Ascending aorta (tissue), 2 donors: ENCODE measurements at regions of chr16 and their contacts with region 1.

Region 1: GRCh38 chr16:53503270-53503923 is 388 bp upstream of the AKTIP start:
- DNase-seq: peak; percentile 100
- H3K4me3 ChIP-seq: peak overlapping the region; percentile 83 to 93
- H3K27ac ChIP-seq: peak overlapping the region; percentile 91 to 97
- H3K4me1 ChIP-seq: peaks cover 10 to 27% of the 10 kb centered on the region in 2 donors
- H3K27me3 ChIP-seq: no peaks in the 10 kb centered on the region
- CTCF ChIP-seq: no peak

Region 2: DNA sequence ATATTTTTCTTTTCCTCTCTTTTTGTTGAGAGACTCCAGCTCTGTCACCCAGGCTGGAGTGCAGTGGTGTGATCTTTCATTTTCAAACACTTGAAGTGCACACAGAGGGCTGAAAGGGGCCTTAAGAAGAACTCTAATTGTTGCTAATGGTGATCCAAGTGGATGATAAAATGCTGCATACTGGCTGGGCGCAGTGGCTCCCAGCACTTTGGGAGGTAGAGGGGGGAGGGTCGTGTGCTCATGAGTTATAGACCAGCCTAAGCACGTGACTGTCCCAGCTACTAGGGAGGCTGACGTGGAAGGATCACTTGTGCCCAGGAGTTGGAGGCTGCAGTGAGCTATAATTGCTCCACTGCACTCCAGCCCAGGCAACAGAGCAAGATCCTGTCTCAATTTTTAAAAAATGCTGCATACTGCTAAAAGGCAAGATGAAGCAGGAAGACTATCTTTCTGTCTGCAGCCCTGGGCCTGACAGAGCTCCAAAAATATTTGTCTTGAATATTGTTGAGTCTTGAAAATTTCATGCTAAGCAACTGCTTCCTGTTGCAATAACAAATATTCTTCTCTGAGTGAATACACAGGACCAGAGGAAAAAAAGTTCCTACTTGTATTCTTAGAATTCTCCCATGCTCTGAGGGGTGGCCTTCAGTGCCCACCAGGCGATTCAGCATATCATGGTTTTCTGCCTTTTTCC is 63.3 kb after region 1 on chr16:
- intact Hi-C with region 1: no loop called
- DNase-seq: no peak
- H3K4me3 ChIP-seq: no peak overlapping the region
- H3K27ac ChIP-seq: no peak overlapping the region
- H3K4me1 ChIP-seq: no peaks in the 10 kb centered on the region
- H3K27me3 ChIP-seq: no peaks in the 10 kb centered on the region
- CTCF ChIP-seq: no peak

Region 3: DNA sequence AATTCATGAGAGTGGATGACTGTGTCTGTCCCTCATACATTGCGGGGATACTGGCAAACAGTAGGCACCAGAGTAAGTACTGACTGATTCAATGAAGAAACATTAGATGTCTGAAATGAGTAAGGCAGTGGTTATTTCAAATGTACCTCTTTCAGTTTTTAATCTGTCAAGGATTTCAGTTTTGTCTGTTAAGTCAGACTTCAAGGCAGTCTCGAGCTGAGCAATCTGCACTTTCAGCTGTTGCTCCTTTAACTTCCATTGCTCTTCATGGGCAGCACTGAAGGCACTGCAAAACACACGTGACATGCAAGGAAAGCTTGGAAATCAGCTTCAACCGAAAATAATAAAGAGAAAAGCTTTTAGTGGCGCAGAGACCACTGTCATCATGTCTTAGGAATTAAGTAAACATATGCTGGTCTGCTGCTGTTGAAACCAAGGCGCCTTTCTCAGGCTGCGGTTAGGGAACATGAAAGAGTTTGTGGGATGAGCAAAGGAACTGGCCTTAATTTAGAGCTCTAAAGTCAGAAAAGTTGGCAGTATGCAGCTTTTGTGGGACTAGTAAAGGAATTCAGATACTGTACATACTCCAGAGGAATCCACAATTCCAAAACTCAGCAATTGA is 161.4 kb after region 1 on chr16:
- intact Hi-C with region 1: no loop called
- DNase-seq: no peak
- H3K4me3 ChIP-seq: peak overlapping the region in 1 of 2 donors; percentile 57
- H3K27ac ChIP-seq: peak overlapping the region; percentile 64 to 74
- H3K4me1 ChIP-seq: peaks cover 0 to 3% of the 10 kb centered on the region in 2 donors
- H3K27me3 ChIP-seq: no peaks in the 10 kb centered on the region
- CTCF ChIP-seq: no peak

Region 4: DNA sequence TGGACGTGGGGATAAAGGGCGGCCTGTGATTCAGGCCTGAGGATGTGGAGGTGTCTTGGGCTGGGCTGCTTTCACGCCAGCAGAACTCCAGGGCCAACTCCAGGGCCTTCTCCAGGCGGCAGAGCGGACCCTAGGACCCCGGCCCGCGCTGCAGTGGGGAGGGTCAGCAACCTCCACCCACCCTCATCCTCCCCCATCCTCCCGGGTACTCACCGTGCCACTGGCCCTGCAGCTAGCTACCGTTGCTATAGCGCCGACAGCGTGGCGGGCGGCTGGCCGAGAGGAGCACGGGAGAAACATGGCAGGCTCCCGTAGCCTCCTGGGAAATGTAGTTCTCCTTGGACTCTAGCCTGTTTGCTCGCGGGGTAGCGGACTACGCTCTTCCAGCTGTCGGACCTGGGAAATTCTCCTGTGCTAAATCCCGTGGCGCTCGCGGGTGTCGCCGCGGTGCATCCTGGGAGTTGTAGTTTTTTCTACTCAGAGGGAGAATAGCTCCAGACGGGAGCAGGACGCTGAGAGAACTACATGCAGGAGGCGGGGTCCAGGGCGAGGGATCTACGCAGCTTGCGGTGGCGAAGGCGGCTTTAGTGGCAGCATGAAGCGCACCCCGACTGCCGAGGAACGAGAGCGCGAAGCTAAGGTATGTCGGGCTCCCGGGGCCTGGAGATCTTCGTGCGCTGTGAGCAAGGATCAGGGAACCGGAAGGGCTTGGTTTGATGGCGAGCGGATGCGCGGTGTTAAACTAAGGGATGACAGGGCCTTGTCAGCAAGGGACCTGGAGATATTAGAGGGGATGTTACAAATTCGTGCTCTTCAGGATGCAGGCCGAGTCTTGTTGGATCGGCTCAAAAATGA is 200.4 kb after region 1 on chr16 and contains the starts of genes FTO and RPGRIP1L:
- intact Hi-C with region 1: loop called (anchors 2 kb)
- DNase-seq: peak; percentile 98 to 100
- H3K4me3 ChIP-seq: peak within 1 kb of the TSS; percentile 75 to 84
- H3K27ac ChIP-seq: peak within 1 kb of the TSS; percentile 58 to 70
- H3K4me1 ChIP-seq: peaks cover 0 to 3% of the 10 kb centered on the region in 2 donors
- H3K27me3 ChIP-seq: no peaks in the 10 kb centered on the region
- CTCF ChIP-seq: peak in 1 of 3 experiments; percentile 14
- total RNA-seq, gene FTO: 50.2 TPM
- total RNA-seq, gene RPGRIP1L: 0.96 TPM

Region 5: DNA sequence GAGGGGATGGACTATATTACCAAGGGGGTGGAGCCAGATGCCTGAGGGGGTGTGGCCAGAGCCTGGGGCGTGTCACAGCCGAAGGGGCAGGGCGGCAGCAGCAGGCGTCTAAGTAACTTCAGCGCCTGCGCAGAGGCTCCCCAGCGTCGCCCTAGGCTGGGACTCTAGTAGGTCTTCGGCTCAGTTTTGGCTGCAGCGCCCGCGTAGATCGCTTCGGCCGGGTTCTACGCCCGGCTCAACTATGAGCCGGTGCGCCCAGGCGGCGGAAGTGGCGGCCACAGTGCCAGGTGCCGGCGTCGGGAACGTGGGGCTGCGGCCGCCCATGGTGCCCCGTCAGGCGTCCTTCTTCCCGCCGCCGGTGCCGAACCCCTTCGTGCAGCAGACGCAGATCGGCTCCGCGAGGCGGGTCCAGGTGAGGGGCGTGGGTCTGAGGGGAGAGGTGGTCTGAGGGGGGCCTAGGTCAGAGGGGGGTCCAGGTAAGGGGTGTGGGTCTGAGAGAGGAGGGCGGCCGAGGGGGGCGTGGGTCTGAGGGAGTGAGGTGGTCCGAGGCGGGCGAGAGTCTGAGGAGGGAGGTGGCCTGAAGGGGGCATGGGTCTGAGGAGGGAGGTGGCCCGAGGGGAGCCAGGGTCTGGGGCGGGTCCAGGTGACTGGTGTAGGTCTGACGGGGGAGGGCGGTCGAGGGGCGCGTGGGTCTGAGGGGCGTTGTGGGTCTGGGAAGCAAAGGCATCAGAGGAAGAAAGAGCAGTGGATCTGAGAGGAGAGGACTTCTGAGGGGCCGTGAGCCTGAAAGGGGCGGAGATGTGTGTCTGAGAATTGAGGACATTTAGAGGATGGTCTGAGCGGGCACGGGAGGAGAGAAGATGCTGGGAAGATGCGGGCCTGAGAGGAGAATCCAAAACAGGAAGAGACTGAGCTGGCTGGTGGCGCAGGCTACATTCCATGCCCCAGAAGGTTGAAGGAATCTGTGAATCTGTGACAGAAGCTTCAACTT is 2005.8 kb after region 1 on chr16 and contains the start of gene LPCAT2:
- intact Hi-C with region 1: loop called (anchors 10 kb)
- DNase-seq: peak in 1 of 2 donors; percentile 92
- H3K4me3 ChIP-seq: peak within 1 kb of the TSS; percentile 65 to 78
- H3K27ac ChIP-seq: peak within 1 kb of the TSS; percentile 44 to 61
- H3K4me1 ChIP-seq: no peaks in the 10 kb centered on the region
- H3K27me3 ChIP-seq: no peaks in the 10 kb centered on the region
- CTCF ChIP-seq: no peak
- total RNA-seq, gene LPCAT2: 44.2 TPM